Sigmoid colon (tissue), 7 donors: ENCODE measurements at regions of chr10 and their contacts with region 1.

Region 1: GRCh38 chr10:73495884-73496674 is at the start of gene PPP3CB:
- DNase-seq: peak; percentile 93
- H3K4me3 ChIP-seq: peak within 1 kb of the TSS; percentile 62 to 85 (median 84)
- H3K27ac ChIP-seq: peak within 1 kb of the TSS; percentile 90 to 96 (median 92)
- H3K4me1 ChIP-seq: peaks cover 0 to 54% (median 41%) of the 10 kb centered on the region in 4 donors
- H3K27me3 ChIP-seq: no peaks in the 10 kb centered on the region
- CTCF ChIP-seq: no peak
- EP300 ChIP-seq: peak in 1 of 4 donors; percentile 28
- POLR2A ChIP-seq: no peak
- total RNA-seq, gene PPP3CB: 75.5 to 103 (median 85.8) TPM

Region 2: GRCh38 chr10:73413528-73414229 is 82.4 kb before region 1 on chr10 and contains the start of gene ANXA7:
- intact Hi-C with region 1: loop called (anchors 5 kb)
- DNase-seq: peak; percentile 96
- H3K4me3 ChIP-seq: peak within 1 kb of the TSS; percentile 76 to 82 (median 77)
- H3K27ac ChIP-seq: peak within 1 kb of the TSS; percentile 90 to 95 (median 92)
- H3K4me1 ChIP-seq: peaks cover 0 to 32% (median 23%) of the 10 kb centered on the region in 4 donors
- H3K27me3 ChIP-seq: no peaks in the 10 kb centered on the region
- CTCF ChIP-seq: peak in 2 of 4 experiments; percentile 13 to 19
- EP300 ChIP-seq: no peak
- POLR2A ChIP-seq: peak; percentile 69 to 71
- total RNA-seq, gene ANXA7: 61.5 to 96.8 (median 91.4) TPM